ENCODE measurements at regions of chr5 and their contacts with region 1.

Region 1: GRCh38 chr5:38193015-38193581 is 65.3 kb upstream of the EGFLAM start:
- DNase-seq: peak; percentile 64
- ATAC-seq: peak; percentile 71
- H3K4me3 ChIP-seq: no peak overlapping the region
- H3K27ac ChIP-seq: no peak overlapping the region
- H3K4me1 ChIP-seq: peaks cover 54% of the 10 kb centered on the region
- H3K27me3 ChIP-seq: 0 out of 5 replicates have a peak, but pooled peaks cover 0 to 12% of the 10 kb centered on the region in 2 experiments
- CTCF ChIP-seq: peak; percentile 96
- EP300 ChIP-seq: no peak
- POLR2A ChIP-seq: no peak
- RAD21 ChIP-seq: peak; percentile 96

Region 2: GRCh38 chr5:37724395-37725125 is 468.5 kb before region 1 on chr5:
- CTCF ChIA-PET with region 1: no interaction called
- POLR2A ChIA-PET with region 1: no interaction called
- in situ Hi-C with region 1: no loop called
- intact Hi-C with region 1: loop called (anchors 2 kb)
- DNase-seq: no peak
- ATAC-seq: peak; percentile 52
- H3K4me3 ChIP-seq: no peak overlapping the region
- H3K27ac ChIP-seq: peak overlapping the region; percentile 36
- H3K4me1 ChIP-seq: peaks cover 26% of the 10 kb centered on the region
- H3K27me3 ChIP-seq: no peaks in the 10 kb centered on the region
- CTCF ChIP-seq: no peak
- EP300 ChIP-seq: no peak
- POLR2A ChIP-seq: no peak
- RAD21 ChIP-seq: no peak

Region 3: GRCh38 chr5:37837414-37838032 is 355.6 kb before region 1 on chr5:
- CTCF ChIA-PET with region 1: interaction called, 6 read pairs
- POLR2A ChIA-PET with region 1: no interaction called
- in situ Hi-C with region 1: loop called (anchors 5 kb)
- intact Hi-C with region 1: loop called (anchors 5 kb)
- DNase-seq: no peak
- ATAC-seq: no peak
- H3K4me3 ChIP-seq: no peak overlapping the region
- H3K27ac ChIP-seq: no peak overlapping the region
- H3K4me1 ChIP-seq: peaks cover 25% of the 10 kb centered on the region
- H3K27me3 ChIP-seq: peaks cover 6 to 60% of the 10 kb centered on the region in 2 experiments
- CTCF ChIP-seq: peak; percentile 41
- EP300 ChIP-seq: no peak
- POLR2A ChIP-seq: no peak
- RAD21 ChIP-seq: no peak

Region 4: DNA sequence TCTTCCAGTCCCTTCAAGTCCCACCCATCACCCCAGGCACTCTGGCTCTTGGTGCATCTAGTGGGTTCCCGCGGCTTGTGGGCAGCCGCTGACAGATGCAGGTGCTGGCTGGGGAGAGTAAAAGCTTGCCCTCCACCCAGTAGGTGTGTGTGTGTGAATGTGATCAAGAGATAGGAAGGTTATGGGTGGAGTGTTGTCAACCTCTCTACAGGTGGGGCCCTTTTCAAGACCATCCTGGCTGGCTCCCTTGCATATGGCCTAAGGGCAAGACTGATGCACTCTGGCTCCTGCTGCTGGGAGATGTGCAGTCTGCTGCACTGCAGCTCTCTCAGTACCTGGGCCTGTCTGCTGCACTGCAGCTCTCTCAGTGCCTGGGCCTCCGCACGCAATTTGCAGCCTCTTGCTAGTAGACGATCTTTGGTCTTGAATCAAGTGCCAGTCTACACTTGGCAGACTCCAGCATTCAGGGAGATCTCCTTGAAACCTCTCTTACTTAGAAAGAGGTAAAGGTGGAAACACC is 163.6 kb before region 1 on chr5:
- CTCF ChIA-PET with region 1: interaction called, 11 read pairs
- POLR2A ChIA-PET with region 1: no interaction called
- in situ Hi-C with region 1: loop called (anchors 5 kb)
- intact Hi-C with region 1: loop called (anchors 1 kb)
- DNase-seq: no peak
- ATAC-seq: no peak
- H3K4me3 ChIP-seq: no peak overlapping the region
- H3K27ac ChIP-seq: no peak overlapping the region
- H3K4me1 ChIP-seq: peaks cover 22% of the 10 kb centered on the region
- H3K27me3 ChIP-seq: peaks cover 2 to 13% of the 10 kb centered on the region in 2 experiments; a peak in 2 of 5 replicates
- CTCF ChIP-seq: no peak
- EP300 ChIP-seq: no peak
- POLR2A ChIP-seq: no peak
- RAD21 ChIP-seq: no peak

Region 5: DNA sequence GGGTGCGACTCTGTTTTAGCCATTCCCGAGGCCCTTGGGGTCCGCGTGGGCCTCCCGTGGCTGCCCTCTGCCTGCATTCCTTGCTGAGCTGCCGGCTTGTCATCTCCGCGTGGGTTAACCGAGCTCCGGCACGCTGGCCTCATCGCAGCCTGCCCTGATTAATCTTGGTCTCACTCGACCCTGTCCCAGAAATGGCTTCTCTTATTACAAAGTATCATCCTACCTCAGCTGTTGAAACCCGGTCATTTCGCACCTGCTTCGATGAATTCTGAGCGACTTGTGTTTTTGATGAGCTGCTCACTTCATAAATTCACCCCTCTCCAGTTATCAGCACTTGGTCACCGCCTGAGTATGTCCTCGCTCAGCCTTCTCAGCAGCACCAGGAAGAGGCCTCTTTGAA is 58.3 kb before region 1 on chr5:
- CTCF ChIA-PET with region 1: no interaction called
- POLR2A ChIA-PET with region 1: no interaction called
- in situ Hi-C with region 1: no loop called
- intact Hi-C with region 1: no loop called
- DNase-seq: no peak
- ATAC-seq: no peak
- H3K4me3 ChIP-seq: no peak overlapping the region
- H3K27ac ChIP-seq: no peak overlapping the region
- H3K4me1 ChIP-seq: peaks cover 27% of the 10 kb centered on the region
- H3K27me3 ChIP-seq: no peaks in the 10 kb centered on the region
- CTCF ChIP-seq: no peak
- EP300 ChIP-seq: no peak
- POLR2A ChIP-seq: no peak
- RAD21 ChIP-seq: no peak

Region 6: DNA sequence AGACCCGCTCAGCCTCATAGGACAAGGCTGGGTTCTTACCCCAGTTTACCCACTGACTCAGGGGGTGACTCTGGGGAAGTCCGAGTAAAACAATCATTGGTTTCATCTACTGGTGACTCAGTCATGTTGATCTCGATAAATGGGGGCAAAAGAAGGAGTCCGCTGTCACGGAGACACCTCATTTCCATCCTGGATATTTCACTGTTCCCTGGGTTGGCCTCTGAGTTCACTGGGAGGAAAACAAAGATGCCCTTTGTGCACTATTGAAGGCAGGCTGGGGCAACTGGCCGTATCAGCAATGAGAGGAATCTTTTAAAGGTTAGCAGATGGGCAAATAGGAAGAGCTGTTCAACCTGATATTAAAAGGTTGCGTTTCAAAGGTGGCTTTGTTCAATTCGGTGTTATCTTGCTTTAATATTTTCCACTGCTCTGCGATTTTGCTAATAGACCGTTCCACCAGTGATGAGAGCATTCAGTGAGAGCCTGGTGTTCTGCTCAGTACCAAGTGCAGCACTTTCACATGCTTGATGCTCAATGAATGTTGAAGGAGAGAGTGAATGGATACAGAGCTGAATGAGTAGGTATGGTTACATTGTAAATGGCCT is 45.0 kb before region 1 on chr5:
- CTCF ChIA-PET with region 1: no interaction called
- POLR2A ChIA-PET with region 1: interaction called, 7 read pairs
- in situ Hi-C with region 1: no loop called
- intact Hi-C with region 1: loop called (anchors 2 kb)
- DNase-seq: peak; percentile 99
- ATAC-seq: peak; percentile 97
- H3K4me3 ChIP-seq: peak overlapping the region; percentile 29 to 49 (median 48); a peak in 5 of 6 replicates
- H3K27ac ChIP-seq: peak overlapping the region; percentile 96
- H3K4me1 ChIP-seq: peaks cover 57% of the 10 kb centered on the region
- H3K27me3 ChIP-seq: no peaks in the 10 kb centered on the region
- CTCF ChIP-seq: peak; percentile 10; the same call in 1 of the 2 replicates
- EP300 ChIP-seq: peak; percentile 83 to 88; a peak in 3 of 4 replicates
- POLR2A ChIP-seq: peak; percentile 67 to 95
- RAD21 ChIP-seq: no peak

Region 7: DNA sequence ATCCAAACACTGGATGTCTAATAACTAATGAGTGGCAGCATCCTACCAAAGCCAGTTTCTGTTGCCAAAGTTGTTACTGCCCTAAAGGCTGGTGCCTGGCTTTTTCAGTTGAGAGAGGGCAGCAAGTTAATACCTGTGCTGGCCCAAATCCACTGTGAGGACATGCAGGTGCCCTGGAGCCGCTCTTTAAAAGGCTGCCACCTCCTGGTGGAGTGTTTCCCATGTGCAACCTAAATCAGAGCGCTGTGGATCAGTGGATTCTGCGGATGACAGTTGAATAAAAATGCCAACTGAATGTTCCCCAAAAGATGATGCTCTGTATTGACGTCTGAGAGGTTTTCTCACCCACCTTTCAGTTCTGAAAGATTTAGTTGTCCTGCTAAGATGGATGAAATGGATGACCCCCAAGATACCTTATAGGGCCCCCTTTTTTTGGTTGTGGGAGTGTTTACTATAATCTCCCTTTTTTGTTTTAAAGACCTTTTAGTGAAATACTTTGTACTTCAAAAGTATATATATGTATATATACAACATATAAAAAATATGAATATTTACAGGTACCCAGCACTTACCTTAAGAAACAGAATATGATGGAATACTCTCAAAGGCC is 211.7 kb after region 1 on chr5:
- CTCF ChIA-PET with region 1: no interaction called
- POLR2A ChIA-PET with region 1: no interaction called
- in situ Hi-C with region 1: no loop called
- intact Hi-C with region 1: no loop called
- DNase-seq: peak; percentile 24
- ATAC-seq: peak; percentile 83
- H3K4me3 ChIP-seq: no peak overlapping the region
- H3K27ac ChIP-seq: no peak overlapping the region
- H3K4me1 ChIP-seq: no peaks in the 10 kb centered on the region
- H3K27me3 ChIP-seq: peaks cover 0 to 14% of the 10 kb centered on the region in 2 experiments; a peak in 1 of 5 replicates
- CTCF ChIP-seq: peak; percentile 71
- EP300 ChIP-seq: no peak
- POLR2A ChIP-seq: no peak
- RAD21 ChIP-seq: peak; percentile 49; the same call in 1 of the 2 replicates

Measured in HepG2 (cell line).